Posterior vena cava (tissue), 2 donors: ENCODE measurements at regions of chr6 and their contacts with region 1.

Region 1: DNA sequence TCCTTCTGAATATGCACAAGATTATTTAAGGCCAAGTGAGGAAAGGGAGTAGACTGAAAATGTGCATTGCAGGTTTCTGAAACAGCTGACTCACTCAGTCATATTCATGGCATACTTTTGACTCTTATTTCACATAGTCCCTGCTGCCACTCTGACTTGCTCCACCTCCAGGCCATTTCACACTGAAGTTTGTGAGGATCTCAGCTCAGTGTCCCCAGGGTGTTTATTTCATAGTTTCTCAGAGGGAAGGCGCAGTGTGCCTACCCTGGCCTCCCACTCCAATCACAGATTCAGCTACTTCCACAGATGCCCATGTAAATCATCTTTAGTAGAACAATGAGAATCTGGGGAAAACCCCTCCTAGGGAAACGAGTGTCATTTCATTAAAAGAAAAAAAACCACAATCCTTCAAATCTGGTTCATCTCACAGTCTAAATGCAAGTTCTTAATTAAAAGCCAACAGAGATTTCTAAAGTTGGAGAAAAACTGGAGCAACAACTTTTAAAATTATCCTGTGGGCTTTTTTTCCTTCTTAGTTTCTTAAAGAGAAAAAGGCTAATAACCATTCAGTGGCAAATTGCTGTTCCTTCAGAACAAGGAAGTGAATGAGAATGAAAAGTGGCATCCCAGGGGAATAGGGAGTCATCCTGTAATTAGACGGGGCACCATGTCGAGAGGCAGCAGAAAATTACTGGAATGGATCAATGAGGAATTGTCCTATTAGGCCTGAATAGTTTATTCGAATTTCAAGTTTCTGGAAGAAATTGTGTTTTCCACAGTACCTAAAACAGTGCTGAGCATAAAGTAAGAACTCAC is 133.6 kb downstream of the TFAP2B start:
- DNase-seq: no peak

Region 2: DNA sequence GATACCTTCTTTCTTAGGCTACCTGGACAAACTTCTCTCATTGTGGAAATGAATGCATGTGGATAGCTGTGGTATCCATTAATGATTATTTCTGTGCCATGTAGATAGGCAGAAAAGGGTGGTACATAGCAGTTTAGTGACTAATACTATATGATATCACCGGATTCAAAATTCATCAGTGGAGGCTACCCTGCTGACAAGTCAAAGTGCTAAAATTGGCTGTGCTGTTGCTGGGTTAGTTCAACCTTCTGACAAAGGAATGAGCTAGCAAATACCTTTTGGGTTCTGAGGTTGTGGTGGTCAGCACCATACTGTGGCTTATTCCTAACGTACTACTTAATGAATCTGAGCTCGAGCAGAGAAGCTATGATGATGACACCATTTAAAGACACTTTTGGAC is 24.5 kb before region 1 on chr6:
- intact Hi-C with region 1: no loop called
- DNase-seq: no peak

Region 3: GRCh38 chr6:52190409-52190808 is 1238.1 kb after region 1 on chr6:
- intact Hi-C with region 1: loop called in 1 of 2 experiments (anchors 10 kb)
- DNase-seq: no peak